Esophagus squamous epithelium (tissue), 5 donors: ENCODE measurements at regions of chr9 and their contacts with region 1.

Region 1: GRCh38 chr9:92634712-92635605 is 35.0 kb downstream of the IPPK start:
- DNase-seq: no peak
- H3K4me3 ChIP-seq: no peak overlapping the region
- H3K27ac ChIP-seq: peak overlapping the region in 3 of 4 donors; percentile 25 to 50 (median 25)
- H3K4me1 ChIP-seq: peaks cover 0 to 15% (median 5%) of the 10 kb centered on the region in 3 donors
- H3K27me3 ChIP-seq: no peaks in the 10 kb centered on the region
- CTCF ChIP-seq: peak; percentile 68 to 90 (median 86)
- POLR2A ChIP-seq: no peak

Region 2: DNA sequence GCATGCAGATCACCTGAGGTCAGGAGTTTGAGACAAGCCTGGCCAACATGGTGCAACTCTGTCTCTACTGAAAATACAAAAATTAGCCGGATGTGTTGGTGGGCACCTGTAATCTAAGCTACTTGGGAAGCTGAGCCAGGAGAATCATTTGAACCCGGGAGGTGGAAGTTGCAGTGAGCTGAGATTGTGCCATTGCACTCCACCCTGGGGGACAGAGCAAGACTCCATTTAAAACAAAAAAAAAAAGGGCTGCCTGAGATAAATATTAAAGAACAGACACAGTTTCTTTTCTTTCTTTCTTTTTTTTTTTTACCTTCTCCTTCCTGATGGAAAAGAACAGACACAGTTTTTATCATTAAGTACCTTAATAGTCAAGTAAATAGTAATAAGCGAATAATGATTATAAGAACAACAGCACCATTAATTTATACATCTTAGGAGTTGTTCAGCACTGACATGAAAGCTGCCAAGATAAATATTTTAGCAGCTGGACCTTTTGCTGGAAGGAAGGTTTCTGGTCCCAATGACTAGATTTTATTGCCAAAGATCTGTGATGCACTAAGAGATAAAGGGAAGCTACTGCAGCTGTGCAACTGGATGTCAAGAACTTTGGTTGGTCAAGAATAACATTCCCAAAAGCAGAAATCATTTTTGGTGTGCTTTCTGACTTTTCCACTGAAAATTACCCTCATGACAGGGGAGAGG is 302.2 kb before region 1 on chr9:
- intact Hi-C with region 1: loop called (anchors 10 kb)
- DNase-seq: no peak
- H3K4me3 ChIP-seq: no peak overlapping the region
- H3K27ac ChIP-seq: no peak overlapping the region
- H3K4me1 ChIP-seq: peaks cover 0 to 6% (median 0%) of the 10 kb centered on the region in 3 donors
- H3K27me3 ChIP-seq: no peaks in the 10 kb centered on the region
- CTCF ChIP-seq: no peak
- POLR2A ChIP-seq: no peak

Region 3: GRCh38 chr9:92764988-92765936 is 130.3 kb after region 1 on chr9:
- intact Hi-C with region 1: no loop called
- DNase-seq: peak; percentile 90
- H3K4me3 ChIP-seq: peak overlapping the region; percentile 78 to 99 (median 90)
- H3K27ac ChIP-seq: peak overlapping the region; percentile 99 to 100 (median 100)
- H3K4me1 ChIP-seq: peaks cover 48 to 81% (median 49%) of the 10 kb centered on the region in 3 donors
- H3K27me3 ChIP-seq: no peaks in the 10 kb centered on the region
- CTCF ChIP-seq: peak; percentile 87 to 98 (median 95)
- POLR2A ChIP-seq: peak in 3 of 4 donors; percentile 40 to 94 (median 92)